ENCODE measurements at regions of chr1 and their contacts with region 1.

Region 1: DNA sequence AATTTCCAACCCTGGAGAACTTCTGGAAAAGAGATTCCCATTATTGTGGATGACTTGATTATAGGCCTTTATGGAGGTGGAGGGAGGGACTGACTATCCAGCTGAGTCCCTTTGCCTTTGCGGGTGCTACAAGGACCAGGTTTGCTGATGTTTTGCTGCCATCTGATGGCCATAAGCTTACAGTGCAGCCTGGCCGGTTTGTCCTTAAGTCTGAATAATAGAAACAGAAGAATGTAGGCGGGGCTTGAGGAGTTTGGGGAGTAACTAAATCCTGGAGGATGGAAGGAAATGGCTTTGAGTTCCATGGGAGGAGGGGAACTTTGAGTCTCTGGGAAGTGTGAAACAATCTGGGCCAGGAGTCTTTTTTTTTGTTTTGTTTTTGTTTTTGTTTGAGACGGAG is 55.7 kb upstream of the CD1D start:
- DNase-seq: peak; percentile 98
- H3K4me3 Mint-ChIP-seq: no peak overlapping the region
- H3K27ac Mint-ChIP-seq: no peak overlapping the region
- H3K4me1 Mint-ChIP-seq: peaks cover 14% of the 10 kb centered on the region
- H3K27me3 Mint-ChIP-seq: no peaks in the 10 kb centered on the region
- CTCF ChIP-seq: peak; percentile 98

Region 2: GRCh38 chr1:157490467-157491165 is 634.4 kb before region 1 on chr1:
- CTCF ChIA-PET with region 1: interaction called, 3 read pairs
- POLR2A ChIA-PET with region 1: no interaction called
- intact Hi-C with region 1: loop called (anchors 1 kb)
- DNase-seq: peak; percentile 80
- H3K4me3 Mint-ChIP-seq: no peak overlapping the region
- H3K27ac Mint-ChIP-seq: no peak overlapping the region
- H3K4me1 Mint-ChIP-seq: peaks cover 5% of the 10 kb centered on the region
- H3K27me3 Mint-ChIP-seq: peaks cover 44% of the 10 kb centered on the region
- CTCF ChIP-seq: peak; percentile 82

Region 3: GRCh38 chr1:157878059-157878458 is 246.9 kb before region 1 on chr1:
- CTCF ChIA-PET with region 1: interaction called, 70 read pairs
- POLR2A ChIA-PET with region 1: interaction called, 3 read pairs
- intact Hi-C with region 1: loop called (anchors 1 kb)
- DNase-seq: peak; percentile 74
- H3K4me3 Mint-ChIP-seq: no peak overlapping the region
- H3K27ac Mint-ChIP-seq: no peak overlapping the region
- H3K4me1 Mint-ChIP-seq: no peaks in the 10 kb centered on the region
- H3K27me3 Mint-ChIP-seq: peaks cover 77% of the 10 kb centered on the region
- CTCF ChIP-seq: peak; percentile 57

Region 4: GRCh38 chr1:157992031-157992832 is 132.8 kb before region 1 on chr1:
- CTCF ChIA-PET with region 1: interaction called, 2,587 read pairs
- POLR2A ChIA-PET with region 1: interaction called, 15 read pairs
- intact Hi-C with region 1: loop called (anchors 1 kb)
- DNase-seq: peak; percentile 87
- H3K4me3 Mint-ChIP-seq: peak overlapping the region; percentile 72
- H3K27ac Mint-ChIP-seq: no peak overlapping the region
- H3K4me1 Mint-ChIP-seq: peaks cover 35% of the 10 kb centered on the region
- H3K27me3 Mint-ChIP-seq: no peaks in the 10 kb centered on the region
- CTCF ChIP-seq: peak; percentile 99

Region 5: DNA sequence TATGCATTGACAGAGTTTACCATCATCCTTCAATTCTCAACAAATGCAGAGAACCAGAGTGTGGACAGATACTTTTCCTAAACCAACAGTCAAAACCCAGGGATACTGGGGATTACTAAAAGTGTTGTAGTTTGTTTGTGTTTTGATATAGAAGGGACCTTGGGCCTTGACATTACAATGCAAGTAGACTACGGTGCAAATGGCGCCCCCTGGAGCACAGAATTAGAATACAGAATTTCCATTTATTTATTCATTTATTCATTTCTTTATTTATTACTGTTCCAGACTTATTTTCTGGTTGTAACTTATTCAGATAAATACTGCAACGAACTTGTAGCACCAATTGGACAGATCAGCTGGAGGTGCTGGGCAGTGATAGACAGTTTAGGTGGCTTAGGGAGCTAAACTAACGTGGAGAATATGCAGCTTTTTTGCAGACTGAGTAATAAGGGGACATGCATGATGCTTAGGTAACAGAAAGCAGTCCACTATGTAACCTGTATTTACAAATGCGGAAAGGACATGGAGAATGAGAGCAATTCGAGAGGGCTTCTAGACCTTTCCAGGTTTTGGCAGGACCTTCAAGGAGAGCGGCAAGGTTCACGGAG is 88.9 kb before region 1 on chr1:
- CTCF ChIA-PET with region 1: interaction called, 210 read pairs
- POLR2A ChIA-PET with region 1: interaction called, 4 read pairs
- intact Hi-C with region 1: loop called (anchors 2 kb)
- DNase-seq: peak; percentile 68
- H3K4me3 Mint-ChIP-seq: no peak overlapping the region
- H3K27ac Mint-ChIP-seq: peak overlapping the region; percentile 77
- H3K4me1 Mint-ChIP-seq: peaks cover 45% of the 10 kb centered on the region
- H3K27me3 Mint-ChIP-seq: no peaks in the 10 kb centered on the region
- CTCF ChIP-seq: peak; percentile 92

Region 6: DNA sequence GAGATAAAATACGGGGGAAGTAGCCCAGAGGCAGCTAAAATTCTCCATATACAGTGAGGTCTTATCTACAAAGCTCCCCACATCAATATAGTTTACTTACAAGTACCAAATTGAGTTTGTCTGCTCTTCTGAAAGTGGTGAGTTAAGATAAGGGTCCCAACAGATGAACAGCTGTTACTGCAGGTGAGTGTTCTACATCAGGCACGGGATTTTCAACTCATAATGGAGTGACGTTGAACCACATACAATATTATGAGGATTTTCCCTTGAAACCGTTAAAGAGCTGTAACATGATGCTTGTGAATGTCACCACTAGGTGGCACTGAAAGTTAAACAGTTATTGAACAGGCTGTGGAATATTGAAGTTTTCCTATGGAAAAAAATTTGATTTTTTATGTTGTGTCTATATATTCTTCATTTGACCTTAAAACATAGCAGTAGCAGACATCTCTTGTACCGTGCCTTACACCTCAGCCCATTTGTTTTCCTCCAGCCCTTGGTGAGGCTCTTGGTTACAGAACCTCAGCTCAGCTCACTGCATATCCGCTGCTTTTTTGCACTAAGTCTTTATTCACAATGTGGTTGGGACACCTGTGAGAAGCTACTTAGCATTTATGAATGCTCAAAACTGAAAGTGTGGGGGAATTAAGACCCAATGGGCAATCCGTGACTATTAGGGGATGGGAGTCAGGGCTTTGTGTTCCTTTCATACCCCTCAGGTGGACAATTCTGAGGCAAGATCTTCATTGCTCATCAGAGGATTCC is 78.9 kb after region 1 on chr1:
- CTCF ChIA-PET with region 1: interaction called, 18 read pairs
- POLR2A ChIA-PET with region 1: no interaction called
- intact Hi-C with region 1: no loop called
- DNase-seq: peak; percentile 84
- H3K4me3 Mint-ChIP-seq: no peak overlapping the region
- H3K27ac Mint-ChIP-seq: no peak overlapping the region
- H3K4me1 Mint-ChIP-seq: no peaks in the 10 kb centered on the region
- H3K27me3 Mint-ChIP-seq: peaks cover 81% of the 10 kb centered on the region
- CTCF ChIP-seq: peak; percentile 83

Region 7: GRCh38 chr1:158248118-158248517 is 123.1 kb after region 1 on chr1:
- CTCF ChIA-PET with region 1: no interaction called
- POLR2A ChIA-PET with region 1: no interaction called
- intact Hi-C with region 1: no loop called
- DNase-seq: no peak
- H3K4me3 Mint-ChIP-seq: no peak overlapping the region
- H3K27ac Mint-ChIP-seq: no peak overlapping the region
- H3K4me1 Mint-ChIP-seq: no peaks in the 10 kb centered on the region
- H3K27me3 Mint-ChIP-seq: peaks cover 77% of the 10 kb centered on the region
- CTCF ChIP-seq: no peak

Region 8: DNA sequence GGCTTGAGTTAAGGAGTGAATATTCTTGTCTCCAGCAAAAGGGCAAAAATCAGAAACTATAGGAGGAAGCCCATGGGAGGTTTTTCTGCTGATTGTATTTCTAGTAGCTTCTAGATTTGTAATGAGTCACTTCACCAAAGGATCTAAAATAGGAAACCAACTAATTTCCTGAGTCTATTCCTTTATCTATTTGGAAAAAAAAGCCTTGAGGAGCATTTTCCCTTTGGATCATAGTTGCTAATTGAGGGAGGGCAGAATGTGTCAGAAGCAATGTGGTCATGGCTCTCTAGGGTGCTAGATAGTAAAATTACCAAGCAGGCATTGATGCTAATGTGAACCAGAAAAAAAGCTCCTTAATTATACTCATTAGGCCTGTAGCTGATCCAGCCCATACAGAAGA is 346.9 kb after region 1 on chr1 and contains the start of gene OR10R2:
- CTCF ChIA-PET with region 1: no interaction called
- POLR2A ChIA-PET with region 1: no interaction called
- intact Hi-C with region 1: no loop called
- DNase-seq: no peak
- H3K4me3 Mint-ChIP-seq: no peak within 1 kb of the TSS
- H3K27ac Mint-ChIP-seq: no peak within 1 kb of the TSS
- H3K4me1 Mint-ChIP-seq: no peaks in the 10 kb centered on the region
- H3K27me3 Mint-ChIP-seq: peaks cover 66% of the 10 kb centered on the region
- CTCF ChIP-seq: no peak
- total RNA-seq, gene OR10R2: not detected in 2 replicates